ENCODE measurements at regions of chr20 and their contacts with region 1.

Region 1: GRCh38 chr20:14622796-14623195 is 285.4 kb upstream of the FLRT3 start:
- DNase-seq: peak in 1 of 2 experiments; percentile 21
- H3K4me3 ChIP-seq: no peak overlapping the region
- H3K27ac ChIP-seq: no peak overlapping the region
- H3K4me1 ChIP-seq: peaks cover 0 to 6% (median 1%) of the 10 kb centered on the region in 4 experiments; a peak in 1 of 7 replicates
- H3K27me3 ChIP-seq: no peaks in the 10 kb centered on the region
- CTCF ChIP-seq: peak; percentile 52 to 70 (median 68)
- EP300 ChIP-seq: no peak
- POLR2A ChIP-seq: no peak
- RAD21 ChIP-seq: peak; percentile 50 to 65

Region 2: GRCh38 chr20:14295770-14296309 is 327.0 kb before region 1 on chr20:
- CTCF ChIA-PET with region 1: no interaction called
- POLR2A ChIA-PET with region 1: no interaction called
- DNase-seq: no peak
- H3K4me3 ChIP-seq: no peak overlapping the region
- H3K27ac ChIP-seq: no peak overlapping the region
- H3K4me1 ChIP-seq: no peaks in the 10 kb centered on the region
- H3K27me3 ChIP-seq: no peaks in the 10 kb centered on the region
- CTCF ChIP-seq: no peak
- EP300 ChIP-seq: no peak
- POLR2A ChIP-seq: no peak
- RAD21 ChIP-seq: no peak

Region 3: DNA sequence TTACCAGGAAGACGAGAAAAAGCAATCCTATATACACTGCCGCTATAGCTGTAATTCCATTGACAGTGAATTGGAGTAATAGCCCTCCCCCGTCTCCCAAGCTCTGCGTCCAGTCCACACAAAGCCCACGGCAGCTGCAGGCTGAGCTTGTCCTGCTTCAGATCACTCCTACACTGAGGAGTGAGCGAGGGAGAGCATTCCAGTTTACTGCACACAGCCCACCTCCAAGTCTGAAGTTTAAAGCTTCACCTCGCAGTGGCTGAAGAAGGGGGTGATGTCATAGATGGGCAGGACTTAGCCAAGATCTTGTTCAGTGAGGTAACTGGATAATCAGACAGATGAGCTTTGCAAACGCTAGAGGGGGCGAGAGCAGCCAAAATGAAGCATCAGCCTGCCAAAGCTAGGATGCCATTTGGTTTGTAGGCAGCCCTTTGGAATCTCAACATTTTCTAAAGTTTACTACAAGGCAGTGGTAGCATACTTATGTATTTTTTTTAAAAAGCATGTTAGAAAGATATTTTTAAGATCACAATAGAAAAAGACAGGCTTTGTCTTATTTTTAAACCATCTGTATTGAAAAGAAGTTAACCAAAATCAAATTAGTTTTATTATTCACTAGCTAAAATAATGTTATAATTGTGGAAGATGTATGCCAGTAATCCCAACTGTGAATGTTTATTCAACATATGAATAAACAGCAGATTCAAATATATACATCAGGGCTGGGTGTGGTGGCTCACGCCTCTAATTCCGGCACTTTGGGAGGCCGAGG is 285.2 kb before region 1 on chr20 and contains the start of gene FLRT3:
- CTCF ChIA-PET with region 1: interaction called, 10 read pairs
- POLR2A ChIA-PET with region 1: no interaction called
- DNase-seq: peak; percentile 58 to 69
- H3K4me3 ChIP-seq: peak within 1 kb of the TSS; percentile 28 to 54 (median 36); a peak in 5 of 8 replicates
- H3K27ac ChIP-seq: no peak within 1 kb of the TSS
- H3K4me1 ChIP-seq: peaks cover 0 to 12% (median 3%) of the 10 kb centered on the region in 4 experiments; a peak in 3 of 7 replicates
- H3K27me3 ChIP-seq: no peaks in the 10 kb centered on the region
- CTCF ChIP-seq: peak; percentile 53 to 89 (median 80)
- EP300 ChIP-seq: no peak
- POLR2A ChIP-seq: no peak
- RAD21 ChIP-seq: peak; percentile 95 to 96
- total RNA-seq, gene FLRT3: 0.35 and 0.80 TPM in 2 replicates

Region 4: DNA sequence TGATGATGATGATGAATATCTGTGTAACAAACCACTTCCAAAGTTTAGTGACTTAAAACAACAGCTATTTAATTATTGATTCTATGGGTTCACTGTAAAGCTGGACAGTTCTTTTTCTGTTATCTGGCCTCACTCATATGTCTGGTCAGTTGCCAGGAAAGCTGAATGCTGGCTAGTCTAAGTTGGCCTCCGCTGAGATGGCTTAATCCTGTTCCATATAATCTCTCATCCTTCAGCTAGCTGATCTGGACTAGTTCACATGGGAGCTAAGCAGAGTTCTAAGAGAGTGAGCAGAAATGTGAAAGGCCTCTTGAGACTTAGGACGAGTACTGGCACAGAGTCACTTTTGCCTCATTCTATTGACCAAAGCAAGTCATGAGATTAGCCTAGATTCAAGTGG is 49.3 kb after region 1 on chr20:
- CTCF ChIA-PET with region 1: no interaction called
- POLR2A ChIA-PET with region 1: no interaction called
- DNase-seq: no peak
- H3K4me3 ChIP-seq: no peak overlapping the region
- H3K27ac ChIP-seq: no peak overlapping the region
- H3K4me1 ChIP-seq: no peaks in the 10 kb centered on the region
- H3K27me3 ChIP-seq: no peaks in the 10 kb centered on the region
- CTCF ChIP-seq: no peak
- EP300 ChIP-seq: no peak
- POLR2A ChIP-seq: no peak
- RAD21 ChIP-seq: no peak

Measured in H1 (cell line).